GM18951 (cell line): ENCODE measurements at regions of chr4 and their contacts with region 1.

Region 1: DNA sequence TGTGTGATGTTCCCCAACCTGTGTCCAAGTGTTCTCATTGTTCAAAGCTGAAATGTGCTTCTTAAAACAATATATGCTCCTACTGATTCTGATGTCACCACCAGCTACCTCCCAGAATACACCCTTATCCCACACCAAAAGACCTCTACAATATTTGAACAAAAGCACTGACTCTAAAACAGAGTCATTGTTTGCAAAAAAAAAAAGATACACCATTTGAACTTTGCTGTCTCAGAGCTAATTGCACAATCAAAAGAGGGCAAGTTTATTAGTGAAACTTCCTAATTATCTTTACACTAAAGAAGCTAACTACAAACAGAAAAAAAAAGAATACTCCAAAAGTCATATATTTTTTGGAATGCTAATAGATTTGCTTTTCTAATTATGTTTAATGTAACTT is 34.1 kb upstream of the INTU start:
- POLR2A ChIP-seq: no peak

Region 2: GRCh38 chr4:127732613-127733328 is 134.1 kb after region 1 on chr4:
- in situ Hi-C with region 1: loop called (anchors 5 kb)
- POLR2A ChIP-seq: no peak